ENCODE measurements at regions of chr7 and their contacts with region 1.

Region 1: GRCh38 chr7:29345600-29345999 is 151.0 kb downstream of the CHN2 start:
- DNase-seq: peak; percentile 54 to 70 (median 67)
- H3K4me3 ChIP-seq: no peak overlapping the region
- H3K27ac ChIP-seq: no peak overlapping the region
- H3K4me1 ChIP-seq: peaks cover 18 to 48% (median 38%) of the 10 kb centered on the region in 4 experiments
- H3K27me3 ChIP-seq: no peaks in the 10 kb centered on the region

Region 2: DNA sequence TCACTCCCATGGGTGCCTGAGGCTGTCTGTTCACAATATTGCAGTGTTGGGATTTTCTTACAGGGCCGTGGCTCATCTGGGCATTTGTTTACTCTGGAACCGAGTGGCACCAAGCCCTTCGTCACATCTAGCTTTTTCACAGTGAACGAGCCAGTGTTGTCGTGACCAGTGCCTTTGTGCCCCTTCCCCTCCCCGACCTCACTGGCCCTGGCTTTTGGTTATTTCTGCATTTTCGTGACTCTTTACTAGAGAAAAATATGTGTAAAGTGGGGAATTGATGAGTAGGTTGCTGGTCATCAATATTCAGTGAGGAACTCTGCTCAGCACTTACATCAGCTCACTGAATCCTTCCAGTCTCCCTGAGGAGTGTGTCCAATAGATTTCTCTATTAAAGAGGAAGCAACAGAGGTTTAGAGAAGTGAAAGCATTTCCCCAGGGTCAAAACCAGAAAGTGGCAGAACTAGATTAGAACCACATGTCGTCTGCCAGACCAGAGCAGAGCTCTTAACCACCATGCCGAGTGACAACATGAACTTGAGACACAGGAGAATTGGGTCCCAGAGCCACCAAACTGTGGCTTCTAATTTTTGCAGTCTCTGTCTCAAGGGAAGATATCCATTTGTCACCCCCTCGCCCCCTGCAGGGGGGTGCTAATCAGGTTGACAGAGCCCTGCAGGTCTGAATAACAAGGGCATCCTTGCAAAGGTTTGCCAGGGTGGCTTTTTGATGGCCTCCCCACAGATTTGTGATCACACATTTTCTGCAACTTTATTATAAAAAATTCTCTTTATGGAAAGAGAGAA is 25.7 kb before region 1 on chr7:
- CTCF ChIA-PET with region 1: interaction called, 15 read pairs
- POLR2A ChIA-PET with region 1: no interaction called
- DNase-seq: peak; percentile 56 to 94 (median 91)
- H3K4me3 ChIP-seq: peak overlapping the region in 3 of 7 experiments; percentile 16 to 26 (median 16)
- H3K27ac ChIP-seq: no peak overlapping the region
- H3K4me1 ChIP-seq: peaks cover 2 to 23% (median 14%) of the 10 kb centered on the region in 4 experiments
- H3K27me3 ChIP-seq: no peaks in the 10 kb centered on the region

Region 3: GRCh38 chr7:29328045-29328444 is 17.6 kb before region 1 on chr7:
- CTCF ChIA-PET with region 1: interaction called, 10 read pairs
- POLR2A ChIA-PET with region 1: no interaction called
- DNase-seq: no peak
- H3K4me3 ChIP-seq: no peak overlapping the region
- H3K27ac ChIP-seq: no peak overlapping the region
- H3K4me1 ChIP-seq: peaks cover 7 to 34% (median 12%) of the 10 kb centered on the region in 4 experiments
- H3K27me3 ChIP-seq: no peaks in the 10 kb centered on the region

Region 4: GRCh38 chr7:29483219-29484104 is 137.9 kb after region 1 on chr7:
- CTCF ChIA-PET with region 1: no interaction called
- POLR2A ChIA-PET with region 1: no interaction called
- DNase-seq: no peak
- H3K4me3 ChIP-seq: no peak overlapping the region
- H3K27ac ChIP-seq: no peak overlapping the region
- H3K4me1 ChIP-seq: peaks cover 0 to 14% (median 1%) of the 10 kb centered on the region in 4 experiments
- H3K27me3 ChIP-seq: no peaks in the 10 kb centered on the region

Region 5: DNA sequence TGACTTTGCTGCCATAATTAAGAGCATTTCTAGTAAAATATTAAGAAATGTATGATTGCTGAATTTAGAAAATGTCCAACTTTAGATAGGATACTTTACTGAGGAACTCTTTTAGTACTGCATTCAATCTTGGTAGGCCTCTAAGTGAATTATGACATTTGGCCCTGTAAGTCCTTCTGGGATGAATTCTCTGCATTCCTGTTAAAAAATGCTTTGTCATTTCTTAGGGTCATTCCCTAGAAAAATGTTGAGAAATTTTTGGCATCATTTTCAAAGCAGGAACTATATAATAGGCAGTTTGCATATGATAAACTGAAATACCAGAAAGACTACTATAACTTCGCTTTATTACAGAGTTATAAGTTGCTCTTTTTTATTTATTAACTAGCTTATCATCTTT is 148.8 kb after region 1 on chr7:
- CTCF ChIA-PET with region 1: no interaction called
- POLR2A ChIA-PET with region 1: no interaction called
- DNase-seq: no peak
- H3K4me3 ChIP-seq: no peak overlapping the region
- H3K27ac ChIP-seq: no peak overlapping the region
- H3K4me1 ChIP-seq: peaks cover 0 to 2% (median under 1%) of the 10 kb centered on the region in 4 experiments
- H3K27me3 ChIP-seq: no peaks in the 10 kb centered on the region

Measured in common myeloid progenitor, CD34-positive (primary cell).